IMR-90 (cell line): ENCODE measurements at regions of chr6 and their contacts with region 1.

Region 1: GRCh38 chr6:99393698-99394531 is at the start of gene COQ3:
- DNase-seq: peak; percentile 71
- ATAC-seq: peak; percentile 95
- H3K4me3 ChIP-seq: peak within 1 kb of the TSS; percentile 60
- H3K27ac ChIP-seq: peak within 1 kb of the TSS; percentile 86
- H3K4me1 ChIP-seq: no peaks in the 10 kb centered on the region
- H3K27me3 ChIP-seq: no peaks in the 10 kb centered on the region
- CTCF ChIP-seq: no peak
- POLR2A ChIP-seq: peak; percentile 77
- RAD21 ChIP-seq: no peak
- total RNA-seq, gene COQ3: 8.2 and 9.2 TPM in 2 replicates

Region 2: DNA sequence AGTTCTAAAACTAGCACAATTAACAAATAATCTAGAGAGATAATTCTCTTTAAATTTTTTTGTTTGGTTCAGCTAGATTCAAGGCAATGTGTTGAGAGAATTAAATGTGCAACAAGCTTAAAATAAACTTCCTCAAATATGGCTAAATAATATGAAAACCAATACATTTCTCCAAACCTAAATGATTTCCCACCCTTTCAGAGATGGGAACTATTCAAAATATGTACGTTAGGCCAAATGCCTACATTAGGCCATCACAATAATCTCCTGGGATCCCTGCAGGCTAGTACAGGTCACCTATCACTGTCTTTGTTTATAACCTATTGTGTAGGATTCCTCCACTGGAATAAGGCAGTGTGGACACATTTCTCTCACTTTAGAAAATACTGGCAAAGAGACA is 46.1 kb before region 1 on chr6:
- CTCF ChIA-PET with region 1: no interaction called
- POLR2A ChIA-PET with region 1: interaction called, 12 read pairs
- dilution Hi-C with region 1: no loop called
- in situ Hi-C with region 1: no loop called
- intact Hi-C with region 1: no loop called
- DNase-seq: no peak
- ATAC-seq: no peak
- H3K4me3 ChIP-seq: no peak overlapping the region
- H3K27ac ChIP-seq: no peak overlapping the region
- H3K4me1 ChIP-seq: peaks cover 3% of the 10 kb centered on the region; the same call in 1 of the 2 replicates
- H3K27me3 ChIP-seq: peaks cover 7% of the 10 kb centered on the region; the same call in 1 of the 2 replicates
- CTCF ChIP-seq: no peak
- POLR2A ChIP-seq: no peak
- RAD21 ChIP-seq: no peak

Region 3: GRCh38 chr6:99409672-99410071 is 15.8 kb after region 1 on chr6:
- CTCF ChIA-PET with region 1: no interaction called
- POLR2A ChIA-PET with region 1: no interaction called
- dilution Hi-C with region 1: no loop called
- in situ Hi-C with region 1: no loop called
- intact Hi-C with region 1: loop called (anchors 2 kb)
- DNase-seq: peak; percentile 39
- ATAC-seq: peak; percentile 73
- H3K4me3 ChIP-seq: no peak overlapping the region
- H3K27ac ChIP-seq: no peak overlapping the region
- H3K4me1 ChIP-seq: peaks cover 2% of the 10 kb centered on the region
- H3K27me3 ChIP-seq: no peaks in the 10 kb centered on the region
- CTCF ChIP-seq: no peak
- POLR2A ChIP-seq: no peak
- RAD21 ChIP-seq: no peak

Region 4: GRCh38 chr6:99603421-99604165 is 209.7 kb after region 1 on chr6:
- CTCF ChIA-PET with region 1: no interaction called
- POLR2A ChIA-PET with region 1: no interaction called
- dilution Hi-C with region 1: no loop called
- in situ Hi-C with region 1: no loop called
- intact Hi-C with region 1: no loop called
- DNase-seq: peak; percentile 8
- ATAC-seq: peak; percentile 65
- H3K4me3 ChIP-seq: 0 out of 2 replicates have a peak overlapping the region, but pooled peaks have one; percentile 4
- H3K27ac ChIP-seq: no peak overlapping the region
- H3K4me1 ChIP-seq: no peaks in the 10 kb centered on the region
- H3K27me3 ChIP-seq: peaks cover 89% of the 10 kb centered on the region
- CTCF ChIP-seq: no peak
- POLR2A ChIP-seq: no peak
- RAD21 ChIP-seq: no peak